OCI-LY7 (cell line): ENCODE measurements at regions of chr13 and their contacts with region 1.

Region 1: DNA sequence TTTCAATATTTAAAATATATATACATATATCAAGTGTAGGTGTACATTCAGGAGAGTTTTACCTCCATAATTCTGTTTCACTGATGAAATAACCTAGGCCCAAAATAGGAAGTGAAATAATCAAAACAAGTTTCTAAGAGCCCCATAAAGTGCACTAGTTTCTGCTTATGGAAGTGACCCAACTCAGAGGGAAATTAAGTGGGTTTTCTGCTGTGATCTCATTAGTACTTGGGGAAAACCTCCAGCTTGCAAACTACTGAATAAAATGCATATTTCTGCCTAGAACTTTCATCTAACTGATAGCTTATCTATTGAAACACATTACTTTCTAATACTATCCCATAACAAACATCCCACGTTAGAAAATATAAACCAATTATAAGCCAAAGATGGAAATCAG is 45.4 kb upstream of the MIR17HG start:
- DNase-seq: peak; percentile 69
- H3K4me3 ChIP-seq: no peak overlapping the region
- H3K27ac ChIP-seq: no peak overlapping the region
- H3K4me1 ChIP-seq: peaks cover 18% of the 10 kb centered on the region
- CTCF ChIP-seq: no peak

Region 2: DNA sequence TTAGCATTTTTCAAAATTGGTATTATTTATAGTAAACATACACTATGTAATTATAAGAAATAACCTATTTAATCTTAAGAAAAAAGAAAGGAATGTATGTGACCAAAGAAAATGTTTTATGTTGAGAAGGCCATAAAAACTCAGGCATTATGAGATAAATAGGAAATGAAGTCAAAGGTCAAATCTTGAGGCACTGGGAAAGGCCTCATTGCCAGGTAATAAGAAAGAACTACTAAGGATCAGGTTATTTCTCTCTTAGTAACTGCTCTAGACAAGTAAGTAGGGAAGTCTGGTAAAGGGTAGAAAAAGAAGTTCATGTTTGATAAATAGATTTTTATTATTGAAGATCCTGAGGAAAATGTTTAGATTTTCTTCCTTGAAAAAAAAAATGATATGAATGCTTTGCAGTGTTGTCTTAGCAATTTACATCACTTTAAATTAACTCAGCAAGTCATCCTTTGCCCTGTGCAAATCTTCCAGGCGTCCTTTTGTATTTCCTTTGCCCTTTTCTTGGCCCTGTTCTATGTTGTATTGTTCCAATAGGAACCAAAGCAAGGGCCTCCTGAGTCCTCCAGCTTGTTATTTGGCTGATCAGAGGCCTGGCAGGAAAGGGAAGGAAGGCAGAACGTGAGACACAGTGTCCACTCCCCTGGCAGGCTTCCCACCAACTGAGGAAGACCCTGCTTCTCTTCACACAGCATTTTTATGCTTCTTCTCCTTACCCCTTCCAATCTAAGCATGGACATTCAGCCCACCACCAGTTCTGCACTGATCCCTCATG is 215.0 kb before region 1 on chr13:
- CTCF ChIA-PET with region 1: no interaction called
- POLR2A ChIA-PET with region 1: no interaction called
- intact Hi-C with region 1: no loop called
- DNase-seq: no peak
- H3K4me3 ChIP-seq: no peak overlapping the region
- H3K27ac ChIP-seq: no peak overlapping the region
- H3K4me1 ChIP-seq: no peaks in the 10 kb centered on the region
- CTCF ChIP-seq: no peak

Region 3: DNA sequence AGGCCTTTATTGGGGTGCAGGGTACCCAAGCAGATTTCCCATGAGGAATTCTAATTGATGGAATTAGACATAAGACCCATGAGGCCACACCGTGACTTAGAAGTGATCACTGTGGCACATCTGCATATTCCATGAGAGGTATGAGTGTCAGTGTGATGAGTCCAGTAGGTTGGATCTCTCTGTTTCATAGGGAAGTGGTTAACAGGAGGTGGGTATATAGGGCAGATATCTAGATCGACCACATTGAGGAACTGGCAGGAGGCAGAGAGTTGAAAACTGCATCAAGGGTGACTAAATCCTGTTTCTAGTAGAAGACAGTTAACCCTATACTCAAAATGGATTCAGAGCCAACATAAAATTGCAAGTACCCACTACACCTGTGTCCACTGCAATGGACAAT is 23.2 kb before region 1 on chr13:
- CTCF ChIA-PET with region 1: interaction called, 3 read pairs
- POLR2A ChIA-PET with region 1: interaction called, 19 read pairs
- intact Hi-C with region 1: no loop called
- DNase-seq: no peak
- H3K4me3 ChIP-seq: no peak overlapping the region
- H3K27ac ChIP-seq: no peak overlapping the region
- H3K4me1 ChIP-seq: no peaks in the 10 kb centered on the region
- CTCF ChIP-seq: no peak

Region 4: GRCh38 chr13:91291078-91291477 is 11.0 kb before region 1 on chr13:
- CTCF ChIA-PET with region 1: no interaction called
- POLR2A ChIA-PET with region 1: interaction called, 29 read pairs
- intact Hi-C with region 1: no loop called
- DNase-seq: no peak
- H3K4me3 ChIP-seq: no peak overlapping the region
- H3K27ac ChIP-seq: no peak overlapping the region
- H3K4me1 ChIP-seq: no peaks in the 10 kb centered on the region
- CTCF ChIP-seq: no peak

Region 5: DNA sequence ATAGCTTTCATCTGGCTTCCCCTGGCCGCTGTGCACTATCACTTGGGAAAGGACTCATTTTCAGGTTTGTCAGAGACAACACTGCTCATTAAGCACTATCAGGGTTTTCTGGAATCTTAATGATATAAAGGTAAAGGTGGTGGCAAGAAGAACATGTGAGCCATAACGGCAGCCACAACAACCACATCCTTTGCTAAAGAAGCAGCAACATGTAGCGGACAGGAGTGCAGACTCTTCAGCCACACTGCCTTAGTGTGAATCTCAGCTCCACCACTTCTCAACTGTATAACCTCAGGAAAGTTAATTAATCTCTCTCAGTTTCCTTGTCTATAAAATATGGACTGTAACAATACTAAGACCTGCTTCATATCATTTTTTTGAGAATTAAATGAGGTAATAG is 21.2 kb after region 1 on chr13:
- CTCF ChIA-PET with region 1: no interaction called
- POLR2A ChIA-PET with region 1: interaction called, 57 read pairs
- intact Hi-C with region 1: no loop called
- DNase-seq: no peak
- H3K4me3 ChIP-seq: no peak overlapping the region
- H3K27ac ChIP-seq: no peak overlapping the region
- H3K4me1 ChIP-seq: no peaks in the 10 kb centered on the region
- CTCF ChIP-seq: no peak

Region 6: DNA sequence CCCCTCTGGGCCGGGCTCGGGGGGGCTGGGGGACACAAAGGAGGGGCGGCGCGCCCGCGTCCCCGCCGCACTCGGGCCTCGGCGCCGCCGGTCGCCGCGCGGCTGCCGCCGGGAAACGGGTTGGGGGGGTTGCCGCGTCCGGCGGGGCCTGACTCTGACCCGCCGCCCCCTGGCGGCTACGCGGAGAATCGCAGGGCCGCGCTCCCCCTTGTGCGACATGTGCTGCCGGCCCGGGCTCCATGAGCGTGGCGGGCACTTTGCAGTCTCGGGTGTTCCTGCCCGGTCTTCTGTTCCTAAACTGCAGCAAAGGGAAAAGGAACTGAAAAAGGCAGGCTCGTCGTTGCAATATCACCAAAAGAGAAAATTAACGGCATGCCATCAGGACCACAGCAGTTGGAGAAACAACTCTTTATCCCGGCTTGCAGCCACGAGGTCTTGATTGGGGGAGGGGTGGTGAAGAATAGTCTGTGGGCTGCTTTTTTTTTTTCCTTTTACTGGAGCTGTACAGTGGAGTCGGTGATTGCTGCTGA is 46.9 kb after region 1 on chr13:
- CTCF ChIA-PET with region 1: interaction called, 5 read pairs
- POLR2A ChIA-PET with region 1: interaction called, 37 read pairs
- intact Hi-C with region 1: loop called (anchors 2 kb)
- DNase-seq: peak; percentile 100
- H3K4me3 ChIP-seq: peak overlapping the region; percentile 64
- H3K27ac ChIP-seq: peak overlapping the region; percentile 75
- H3K4me1 ChIP-seq: peaks cover 57% of the 10 kb centered on the region
- CTCF ChIP-seq: no peak

Region 7: DNA sequence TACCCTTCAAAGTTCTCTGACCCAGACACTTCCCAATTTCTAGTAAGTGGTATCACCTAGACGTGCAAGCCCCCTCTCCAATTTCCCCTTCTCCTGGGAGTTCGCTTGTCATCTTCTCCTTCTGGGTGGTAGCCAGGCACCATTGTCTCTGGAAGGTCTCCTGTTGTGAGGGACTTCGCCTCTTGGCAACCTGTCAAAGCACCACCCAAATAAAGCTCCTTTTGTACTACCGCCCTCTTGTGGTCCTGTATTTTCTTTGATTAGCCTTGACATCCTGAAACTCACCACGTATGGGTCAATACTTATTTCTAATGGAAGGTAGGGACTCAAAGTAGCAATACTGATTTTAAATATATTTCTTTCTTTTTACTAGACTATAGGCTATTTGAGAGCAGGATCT is 104.5 kb after region 1 on chr13:
- CTCF ChIA-PET with region 1: no interaction called
- POLR2A ChIA-PET with region 1: interaction called, 12 read pairs
- intact Hi-C with region 1: no loop called
- DNase-seq: peak; percentile 92
- H3K4me3 ChIP-seq: no peak overlapping the region
- H3K27ac ChIP-seq: no peak overlapping the region
- H3K4me1 ChIP-seq: no peaks in the 10 kb centered on the region
- CTCF ChIP-seq: no peak